AG04449 (cell line): ENCODE measurements at regions of chr12 and their contacts with region 1.

Region 1: GRCh38 chr12:3275171-3276041 is 198.2 kb downstream of the TSPAN9 start:
- DNase-seq: no peak
- H3K4me3 ChIP-seq: no peak overlapping the region
- CTCF ChIP-seq: peak; percentile 95

Region 2: GRCh38 chr12:2944401-2945047 is 330.9 kb before region 1 on chr12:
- CTCF ChIA-PET with region 1: no interaction called
- POLR2A ChIA-PET with region 1: no interaction called
- DNase-seq: no peak
- H3K4me3 ChIP-seq: no peak overlapping the region
- CTCF ChIP-seq: peak; percentile 67

Region 3: DNA sequence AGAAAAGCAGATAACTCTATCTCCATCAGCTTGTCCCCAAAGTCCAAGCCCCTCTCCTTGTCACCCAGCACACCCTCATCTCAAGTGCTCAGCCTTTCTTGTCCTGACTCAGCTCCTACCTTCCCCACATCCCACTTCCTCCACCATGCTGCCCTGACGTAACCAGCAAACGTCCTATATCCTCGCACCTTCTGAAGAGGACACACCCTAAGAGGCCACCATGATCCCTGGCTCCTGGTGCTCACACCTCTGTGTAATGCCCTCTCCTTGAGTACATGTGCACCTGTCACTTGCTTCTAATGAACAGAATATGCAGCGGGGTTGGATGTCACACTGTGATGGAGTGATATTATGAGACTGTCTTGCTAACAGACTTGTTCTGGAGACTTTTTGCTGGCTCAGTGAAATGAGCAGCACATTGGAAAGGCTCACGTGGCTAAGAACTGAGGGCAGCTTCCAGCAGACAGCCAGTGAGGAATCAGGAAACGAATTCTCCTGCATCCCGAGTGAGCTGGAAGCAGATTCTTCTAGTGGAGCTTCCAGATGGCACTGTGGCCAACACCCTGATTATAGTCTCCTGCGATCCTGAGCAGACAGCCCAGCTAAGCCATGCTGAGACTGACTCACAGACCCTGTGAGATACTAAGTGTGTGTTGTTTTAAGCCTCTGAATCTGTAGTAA is 214.5 kb before region 1 on chr12:
- CTCF ChIA-PET with region 1: interaction called, 11 read pairs
- POLR2A ChIA-PET with region 1: no interaction called
- DNase-seq: peak; percentile 37
- H3K4me3 ChIP-seq: no peak overlapping the region; the same call in 1 of the 2 replicates
- CTCF ChIP-seq: no peak

Region 4: DNA sequence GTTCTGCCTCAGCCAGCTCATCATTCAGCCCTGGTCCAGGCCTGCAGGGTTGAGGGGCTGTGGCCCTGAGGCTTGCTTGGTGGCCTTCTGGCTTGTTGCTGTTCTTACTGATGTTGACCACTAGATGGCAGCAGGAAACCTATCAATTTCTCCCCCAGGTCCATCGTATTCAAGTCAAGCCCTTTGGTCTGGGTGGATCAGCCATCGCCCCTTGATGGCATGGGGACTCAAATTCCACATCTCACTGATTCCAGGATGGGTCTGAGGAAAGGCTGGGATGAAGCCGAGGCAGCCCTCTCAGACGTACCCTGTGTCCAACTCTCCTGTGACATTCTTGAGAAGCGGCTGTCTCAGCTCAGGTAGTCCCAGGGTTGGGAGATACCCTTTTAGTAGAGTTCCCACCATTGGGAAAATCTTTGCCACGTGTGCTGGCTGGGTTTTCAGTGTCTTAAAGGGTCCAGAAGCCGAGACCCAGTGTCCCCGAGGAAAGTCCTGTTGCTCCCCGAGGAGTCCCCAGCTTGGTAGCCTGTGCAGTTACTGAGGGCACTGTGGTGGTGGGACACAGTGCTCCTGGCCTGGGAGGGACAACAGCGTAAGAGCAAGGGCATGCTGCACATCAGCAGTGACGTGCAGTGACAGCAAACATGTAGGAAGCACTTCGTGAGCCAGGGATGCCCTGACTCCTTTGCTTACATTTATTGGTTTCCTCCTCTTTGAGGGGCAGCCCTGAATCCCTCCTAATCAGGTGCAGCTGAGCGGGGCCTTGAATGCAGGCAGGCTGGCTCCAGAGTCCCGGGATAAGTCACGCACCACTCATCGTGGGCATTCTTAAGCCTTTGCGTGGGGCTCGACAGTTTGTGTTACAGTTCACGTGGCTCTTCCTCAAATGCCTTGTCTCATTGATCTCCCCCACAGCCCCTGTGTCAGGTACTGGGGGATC is 139.6 kb before region 1 on chr12:
- CTCF ChIA-PET with region 1: interaction called, 534 read pairs
- POLR2A ChIA-PET with region 1: interaction called, 7 read pairs
- DNase-seq: no peak
- H3K4me3 ChIP-seq: no peak overlapping the region
- CTCF ChIP-seq: peak; percentile 75

Region 5: DNA sequence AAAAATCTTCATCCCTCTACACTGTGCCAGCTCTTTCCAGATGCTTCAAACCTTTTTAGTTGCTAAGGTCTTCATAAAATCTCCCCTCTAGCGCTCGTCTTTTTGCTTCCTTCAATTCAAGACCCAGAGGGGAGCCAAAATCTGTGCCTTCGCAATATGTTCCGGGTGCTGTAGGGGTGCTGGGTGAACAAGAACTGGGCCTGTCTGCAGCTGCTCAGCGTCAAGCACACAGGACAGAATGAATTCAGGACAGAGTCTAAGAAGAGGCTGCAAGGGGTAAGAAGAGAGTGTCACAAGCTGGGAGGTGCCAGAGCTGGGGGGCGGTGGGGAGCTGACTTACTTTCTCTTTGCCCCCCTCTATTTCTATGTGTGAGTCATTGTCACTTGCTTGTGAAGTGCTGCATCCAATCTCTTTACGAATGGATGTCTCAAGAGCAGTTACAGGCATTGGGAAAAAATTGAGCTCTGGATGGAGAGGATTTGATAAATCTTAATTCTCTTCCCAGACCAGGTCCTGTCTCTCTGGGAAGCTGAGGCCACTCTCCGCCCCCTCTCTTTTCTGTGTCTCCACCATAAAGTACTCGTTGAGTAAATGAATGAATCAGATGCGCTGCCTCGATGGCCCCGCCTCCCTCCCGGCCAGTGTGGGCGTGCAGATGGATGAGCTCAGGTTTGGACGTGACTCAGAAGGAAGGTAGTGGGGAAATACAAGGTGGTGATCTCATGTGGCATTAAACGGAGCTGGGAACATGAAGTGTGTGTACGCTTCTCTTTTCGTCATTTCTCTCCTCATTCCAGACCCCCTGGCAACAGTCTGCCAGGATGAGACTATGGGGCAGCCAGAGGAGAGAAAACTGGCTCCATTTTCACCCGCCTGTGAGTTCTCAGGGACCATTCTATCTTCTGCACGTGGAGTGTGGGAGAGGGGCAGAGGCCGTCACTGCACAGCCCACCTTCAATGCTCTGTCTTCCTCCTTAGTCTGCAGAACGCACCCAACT is 106.9 kb before region 1 on chr12:
- CTCF ChIA-PET with region 1: interaction called, 18 read pairs
- POLR2A ChIA-PET with region 1: no interaction called
- DNase-seq: peak; percentile 79
- H3K4me3 ChIP-seq: no peak overlapping the region; the same call in 1 of the 2 replicates
- CTCF ChIP-seq: no peak

Region 6: DNA sequence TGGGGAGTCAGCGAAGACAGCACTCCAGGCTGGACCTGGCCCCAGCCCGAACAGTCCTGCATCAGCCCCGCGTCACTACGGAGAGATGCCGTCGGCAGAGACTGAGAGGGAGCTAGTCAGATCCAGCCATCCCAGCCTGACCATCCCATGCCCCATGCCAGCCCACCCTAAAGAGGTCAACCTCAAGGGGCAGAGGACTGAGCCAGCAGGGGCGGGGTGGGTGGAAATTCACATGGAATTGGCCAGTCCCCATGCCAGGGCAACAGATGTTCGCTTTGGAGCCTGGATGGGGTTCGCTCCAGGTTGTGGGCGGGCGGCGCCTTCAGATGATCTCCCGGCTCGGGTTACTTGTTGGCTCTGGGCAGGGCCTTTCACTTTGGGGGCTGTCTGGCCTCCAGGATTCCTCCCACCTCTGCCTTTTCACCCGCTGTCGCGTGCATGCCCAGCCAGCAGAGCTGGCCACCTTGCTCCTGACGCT is 44.0 kb before region 1 on chr12:
- CTCF ChIA-PET with region 1: interaction called, 13 read pairs
- POLR2A ChIA-PET with region 1: interaction called, 4 read pairs
- DNase-seq: no peak
- H3K4me3 ChIP-seq: no peak overlapping the region
- CTCF ChIP-seq: no peak

Region 7: GRCh38 chr12:3247629-3248161 is 27.7 kb before region 1 on chr12:
- CTCF ChIA-PET with region 1: interaction called, 10 read pairs
- POLR2A ChIA-PET with region 1: no interaction called
- DNase-seq: no peak
- H3K4me3 ChIP-seq: no peak overlapping the region
- CTCF ChIP-seq: no peak